BJ (cell line): ENCODE measurements at regions of chr1 and their contacts with region 1.

Region 1: GRCh38 chr1:243287652-243288051 is 31.8 kb downstream of the SDCCAG8 start:
- DNase-seq: peak; percentile 55
- H3K4me3 ChIP-seq: no peak overlapping the region
- H3K27me3 ChIP-seq: no peaks in the 10 kb centered on the region
- CTCF ChIP-seq: no peak

Region 2: DNA sequence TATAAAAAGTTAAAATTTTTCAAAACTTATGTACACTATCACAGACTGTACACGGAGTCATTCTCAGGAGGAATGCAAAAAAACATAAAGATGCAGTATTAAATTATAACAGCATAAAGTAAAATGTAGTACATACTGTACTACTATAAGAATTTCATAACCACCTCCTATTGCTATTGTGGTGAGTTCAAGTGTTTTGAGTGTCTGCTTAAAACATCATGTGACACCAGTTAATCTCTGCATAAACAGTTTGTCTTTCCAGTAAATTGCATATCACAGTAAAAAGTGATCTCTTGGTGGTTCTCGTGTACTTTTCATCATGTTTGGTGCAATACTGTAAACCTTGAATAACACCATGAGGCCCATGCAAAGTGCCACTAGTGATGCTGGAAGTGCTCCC is 13.4 kb after region 1 on chr1:
- CTCF ChIA-PET with region 1: interaction called, 4 read pairs
- POLR2A ChIA-PET with region 1: interaction called, 10 read pairs
- DNase-seq: no peak
- H3K4me3 ChIP-seq: no peak overlapping the region
- H3K27me3 ChIP-seq: no peaks in the 10 kb centered on the region
- CTCF ChIP-seq: no peak